Activated CD4-positive, alpha-beta memory T cell treated with anti-CD3 and anti-CD28 coated beads for 36 hours (primary cell): ENCODE measurements at regions of chr15 and their contacts with region 1.

Region 1: DNA sequence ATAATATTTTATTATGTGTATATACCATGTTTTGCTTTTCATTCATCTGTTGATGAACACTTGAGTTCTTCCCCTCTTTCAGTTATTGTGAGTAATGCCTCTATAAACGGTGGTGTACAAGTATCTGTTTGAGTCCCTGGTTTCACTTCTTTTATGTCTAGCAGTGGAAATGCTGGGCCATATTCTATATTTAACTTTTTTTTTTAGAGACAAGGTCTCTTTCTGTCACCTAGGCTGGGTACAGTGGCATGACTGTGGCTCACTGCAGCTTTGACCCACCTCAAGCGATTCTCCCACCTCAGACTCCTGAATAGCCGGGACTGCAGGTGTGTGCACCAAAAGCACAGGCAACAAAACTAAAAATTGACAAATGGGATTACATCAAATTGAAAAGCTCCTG is 19.9 kb downstream of the GOLM2 start:
- DNase-seq: peak; percentile 56
- H3K4me3 Mint-ChIP-seq: peak overlapping the region; percentile 46
- H3K27ac Mint-ChIP-seq: peak overlapping the region; percentile 89
- H3K4me1 Mint-ChIP-seq: peaks cover 39% of the 10 kb centered on the region
- H3K27me3 Mint-ChIP-seq: no peaks in the 10 kb centered on the region

Region 2: DNA sequence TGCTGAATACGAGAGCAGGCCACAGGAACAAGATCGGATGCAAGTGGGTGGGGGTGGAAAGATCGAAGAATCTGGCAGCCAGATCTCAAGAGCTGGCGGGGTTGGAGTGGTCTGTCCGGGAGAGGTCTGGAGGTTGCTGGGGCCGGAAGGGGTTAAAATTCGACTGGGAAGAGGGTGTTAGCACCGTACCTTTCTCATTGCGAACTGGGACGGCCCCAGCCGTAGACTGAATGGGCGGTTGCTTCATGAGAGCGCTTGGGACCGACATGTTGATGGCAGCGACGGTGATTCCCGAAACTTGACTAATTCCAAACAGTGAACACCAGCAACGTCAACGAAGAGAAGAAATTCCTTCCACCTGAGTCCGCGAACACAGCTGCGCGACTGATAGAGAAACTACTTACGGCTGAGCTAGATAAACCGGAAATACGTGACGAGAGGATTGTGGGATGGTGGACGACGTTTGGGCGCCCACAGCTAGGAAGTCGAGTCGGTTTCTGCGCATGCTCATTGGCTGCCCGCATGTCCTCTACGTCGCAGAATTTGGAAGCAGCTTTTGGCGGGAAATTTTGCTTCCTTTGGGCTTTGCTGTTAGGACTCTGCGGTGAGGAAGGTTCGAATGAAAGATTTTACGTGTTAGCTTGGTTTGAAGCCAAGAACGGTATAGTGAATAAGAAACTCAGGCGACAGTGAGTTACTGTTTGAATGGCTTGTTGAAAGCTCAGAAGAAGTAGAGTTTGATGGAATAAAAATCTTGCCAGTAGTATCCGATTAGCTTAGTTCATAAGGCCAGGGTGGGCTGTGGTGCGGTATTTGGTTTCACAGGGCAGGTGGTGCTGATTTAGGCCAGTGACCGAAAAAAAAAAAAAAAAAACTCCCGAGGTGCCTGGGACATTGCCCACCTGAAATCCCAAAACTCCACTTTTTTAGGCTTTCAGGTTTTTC is 483.8 kb before region 1 on chr15 and contains the start of gene MFAP1:
- CTCF ChIA-PET with region 1: no interaction called
- POLR2A ChIA-PET with region 1: no interaction called
- intact Hi-C with region 1: loop called (anchors 2 kb)
- DNase-seq: peak; percentile 96
- H3K4me3 Mint-ChIP-seq: peak within 1 kb of the TSS; percentile 99
- H3K27ac Mint-ChIP-seq: peak within 1 kb of the TSS; percentile 97
- H3K4me1 Mint-ChIP-seq: peaks cover 56% of the 10 kb centered on the region
- H3K27me3 Mint-ChIP-seq: no peaks in the 10 kb centered on the region
- total RNA-seq, gene MFAP1: 37.2 to 38.0 TPM

Region 3: DNA sequence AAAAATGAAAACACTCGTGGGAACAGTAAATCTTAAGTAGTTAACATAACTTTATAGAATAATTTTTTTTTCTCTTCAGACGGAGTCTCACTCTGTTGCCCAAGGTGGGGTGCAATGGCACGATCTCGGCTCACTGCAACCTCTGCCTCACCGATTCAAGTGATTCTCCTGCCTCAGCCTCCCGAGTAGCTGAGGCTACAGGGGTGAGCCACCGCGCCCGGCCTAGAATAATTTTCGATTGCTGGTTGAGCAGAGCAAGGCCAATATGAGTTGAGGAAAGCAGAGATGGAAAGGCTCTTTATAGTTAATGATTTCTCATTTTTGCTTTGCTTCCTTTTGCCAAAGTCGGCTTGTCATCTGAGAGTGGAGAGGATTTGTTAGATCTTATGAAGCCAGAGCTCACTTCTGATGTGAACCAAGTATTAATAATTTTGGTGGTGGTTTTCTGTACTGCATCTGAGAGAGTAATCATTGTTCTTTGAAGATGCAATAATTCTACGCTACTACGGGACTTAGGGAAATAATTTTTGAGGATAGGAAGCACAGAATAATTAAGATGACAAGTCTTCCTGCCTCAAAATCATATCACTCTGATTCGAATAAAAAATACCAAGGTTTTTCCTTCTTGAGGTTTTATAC is 21.5 kb before region 1 on chr15:
- CTCF ChIA-PET with region 1: interaction called, 4 read pairs
- POLR2A ChIA-PET with region 1: interaction called, 15 read pairs
- intact Hi-C with region 1: loop called (anchors 1 kb)
- DNase-seq: no peak
- H3K4me3 Mint-ChIP-seq: peak overlapping the region; percentile 86
- H3K27ac Mint-ChIP-seq: peak overlapping the region; percentile 50
- H3K4me1 Mint-ChIP-seq: peaks cover 36% of the 10 kb centered on the region
- H3K27me3 Mint-ChIP-seq: peaks cover 3% of the 10 kb centered on the region

Region 4: GRCh38 chr15:44468713-44469385 is 160.4 kb after region 1 on chr15:
- CTCF ChIA-PET with region 1: interaction called, 3 read pairs
- POLR2A ChIA-PET with region 1: no interaction called
- intact Hi-C with region 1: loop called (anchors 1 kb)
- DNase-seq: no peak
- H3K4me3 Mint-ChIP-seq: no peak overlapping the region
- H3K27ac Mint-ChIP-seq: peak overlapping the region; percentile 7
- H3K4me1 Mint-ChIP-seq: peaks cover 17% of the 10 kb centered on the region
- H3K27me3 Mint-ChIP-seq: no peaks in the 10 kb centered on the region

Region 5: GRCh38 chr15:44545913-44546802 is 237.7 kb after region 1 on chr15:
- CTCF ChIA-PET with region 1: interaction called, 3 read pairs
- POLR2A ChIA-PET with region 1: no interaction called
- intact Hi-C with region 1: loop called (anchors 1 kb)
- DNase-seq: peak; percentile 76
- H3K4me3 Mint-ChIP-seq: peak overlapping the region; percentile 35
- H3K27ac Mint-ChIP-seq: peak overlapping the region; percentile 74
- H3K4me1 Mint-ChIP-seq: peaks cover 50% of the 10 kb centered on the region
- H3K27me3 Mint-ChIP-seq: no peaks in the 10 kb centered on the region

Region 6: DNA sequence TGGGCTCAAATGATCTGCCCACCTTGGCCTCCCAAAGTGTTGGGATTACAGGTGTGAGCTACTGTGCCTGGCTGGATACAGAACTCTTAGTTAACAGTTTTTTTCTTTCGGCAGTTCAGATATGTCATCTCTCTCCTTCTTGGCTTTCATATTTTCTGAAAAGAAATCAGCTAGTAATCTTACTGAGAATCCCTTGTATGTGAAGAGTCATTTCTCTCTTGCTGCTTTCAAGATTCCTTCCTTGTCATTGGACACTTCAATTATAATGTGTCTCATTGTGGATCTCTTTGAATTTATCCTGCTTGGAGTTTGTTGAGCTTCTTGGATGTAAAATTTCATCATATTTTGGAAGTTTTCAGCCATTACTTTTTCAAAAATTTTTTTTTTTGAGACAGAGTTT is 444.9 kb after region 1 on chr15:
- CTCF ChIA-PET with region 1: no interaction called
- POLR2A ChIA-PET with region 1: no interaction called
- intact Hi-C with region 1: loop called (anchors 10 kb)
- DNase-seq: no peak
- H3K4me3 Mint-ChIP-seq: no peak overlapping the region
- H3K27ac Mint-ChIP-seq: no peak overlapping the region
- H3K4me1 Mint-ChIP-seq: peaks cover 34% of the 10 kb centered on the region
- H3K27me3 Mint-ChIP-seq: no peaks in the 10 kb centered on the region

Region 7: DNA sequence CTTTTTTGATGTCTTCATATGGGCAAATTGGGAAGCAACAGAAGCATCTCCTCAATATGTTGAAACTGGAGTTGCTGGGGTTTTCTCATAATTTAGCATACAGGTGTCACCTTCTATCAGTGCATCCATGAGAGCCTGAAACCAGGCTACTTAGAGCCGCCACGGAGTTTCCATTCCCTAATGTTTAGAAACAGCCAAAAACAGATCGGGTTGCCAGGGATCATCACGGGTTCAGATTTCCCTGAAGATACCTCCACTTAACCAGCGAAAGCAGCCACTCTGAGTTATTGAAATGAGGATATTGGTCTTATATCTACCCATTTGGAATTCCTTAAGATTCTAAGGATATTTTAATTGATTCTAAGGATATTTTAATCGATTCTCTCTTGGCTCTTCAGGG is 662.6 kb after region 1 on chr15:
- CTCF ChIA-PET with region 1: no interaction called
- POLR2A ChIA-PET with region 1: no interaction called
- intact Hi-C with region 1: no loop called
- DNase-seq: no peak
- H3K4me3 Mint-ChIP-seq: no peak overlapping the region
- H3K27ac Mint-ChIP-seq: no peak overlapping the region
- H3K4me1 Mint-ChIP-seq: no peaks in the 10 kb centered on the region
- H3K27me3 Mint-ChIP-seq: no peaks in the 10 kb centered on the region